ENCODE measurements at regions of chr20 and their contacts with region 1.

Region 1: DNA sequence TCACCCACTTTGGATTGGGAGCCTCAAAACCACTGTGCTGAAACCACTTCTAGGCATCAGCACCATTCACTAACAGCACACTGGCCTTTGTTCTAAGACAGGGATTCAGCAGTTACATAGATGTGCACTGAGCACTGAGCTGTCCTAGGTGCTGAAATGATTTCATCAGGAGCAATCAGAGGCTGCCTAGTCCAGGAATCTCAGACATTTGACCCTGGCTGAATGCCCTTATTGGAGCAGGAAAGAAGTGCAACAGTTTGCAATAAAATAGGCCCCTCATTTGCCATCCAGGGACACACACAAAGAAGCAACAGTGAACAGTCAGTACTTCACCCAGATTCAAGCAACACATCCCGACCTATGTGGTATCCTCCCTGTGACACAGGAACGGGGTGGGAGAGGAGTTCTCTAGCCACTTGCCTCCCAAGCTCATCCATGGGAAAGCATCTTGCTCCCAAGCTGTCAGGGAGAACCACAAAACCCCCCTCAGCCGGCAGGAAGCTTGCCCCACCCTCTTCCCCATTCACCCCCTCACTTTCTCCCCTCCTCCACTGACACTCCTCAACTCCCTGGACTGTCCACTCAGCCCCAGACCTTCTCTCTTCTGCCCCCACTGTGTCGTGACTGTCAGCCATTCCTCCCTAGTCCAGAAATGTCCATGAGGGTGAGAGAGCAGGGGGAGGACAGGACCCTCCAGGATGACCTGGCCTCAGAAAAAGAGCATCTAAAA is 304.4 kb downstream of the PREX1 start:
- DNase-seq: no peak
- ATAC-seq: peak; percentile 67

Region 2: GRCh38 chr20:47886460-47887041 is 636.8 kb before region 1 on chr20:
- intact Hi-C with region 1: loop called (anchors 5 kb)
- DNase-seq: no peak
- ATAC-seq: no peak